Activated naive CD8-positive, alpha-beta T cell treated with anti-CD3 and anti-CD28 coated beads, Interleukin-2, amount 10 ng/mL, durations not matched to agents 7 days and 5 days (primary cell): ENCODE measurements at regions of chr7 and their contacts with region 1.

Region 1: DNA sequence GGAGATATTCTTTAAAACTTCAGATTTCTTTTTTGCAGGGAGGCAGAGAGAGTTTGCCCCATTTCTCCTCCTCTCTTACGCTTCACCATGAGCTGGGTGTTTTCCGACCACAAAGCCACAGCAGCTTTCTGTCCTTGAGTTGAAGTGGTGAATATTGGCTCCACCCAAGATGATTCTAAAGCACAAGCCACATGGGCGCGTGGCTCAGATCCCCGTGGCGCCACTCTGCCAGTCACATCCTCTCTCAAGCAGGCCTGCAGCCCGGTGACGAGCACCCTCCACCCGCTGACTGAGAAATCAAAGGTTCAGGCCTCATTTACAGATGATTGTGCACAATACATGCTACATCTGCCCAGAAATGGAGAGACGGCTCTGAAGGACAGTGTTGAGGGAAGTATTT is 27.6 kb upstream of the RNF32 start:
- DNase-seq: peak; percentile 76
- ATAC-seq: peak; percentile 99
- H3K4me3 Mint-ChIP-seq: peak overlapping the region; percentile 49
- H3K27ac Mint-ChIP-seq: peak overlapping the region; percentile 69
- H3K4me1 Mint-ChIP-seq: peaks cover 33% of the 10 kb centered on the region
- H3K27me3 Mint-ChIP-seq: peaks cover 70% of the 10 kb centered on the region

Region 2: DNA sequence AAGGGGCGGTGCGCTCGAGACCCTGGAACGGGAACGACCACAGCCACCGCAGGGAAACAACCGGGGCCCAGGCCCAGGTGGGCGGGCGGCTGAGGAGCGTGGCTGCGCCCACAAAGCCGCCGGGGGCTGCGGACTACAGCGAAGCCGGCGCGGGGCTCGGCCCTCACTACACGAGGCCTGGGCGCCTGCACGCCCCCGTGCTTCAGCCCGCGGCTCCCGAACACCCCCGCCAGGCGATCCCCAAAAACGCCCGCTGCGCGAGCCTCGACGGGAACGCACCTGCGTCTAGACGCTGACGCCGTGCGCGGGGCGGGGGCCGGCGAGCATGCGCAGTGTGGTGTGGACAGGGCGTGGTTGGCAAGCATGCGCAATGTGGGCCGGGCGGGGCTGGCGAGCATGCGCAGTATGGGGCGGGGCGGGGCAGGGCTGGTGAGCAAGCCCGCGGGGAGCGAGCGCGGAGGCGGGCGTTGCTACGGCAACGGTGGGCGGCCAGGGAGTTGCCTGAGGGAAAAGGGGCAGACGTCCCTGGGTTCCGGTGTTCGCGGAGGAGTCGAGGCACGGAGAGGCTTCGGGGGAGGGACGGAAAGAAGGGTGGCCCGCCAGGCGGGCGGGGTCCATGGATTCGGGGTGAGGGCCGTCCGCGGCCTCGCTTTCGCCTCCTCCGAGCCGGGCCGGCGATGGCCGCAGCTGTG is 27.5 kb after region 1 on chr7 and contains the start of gene RNF32:
- POLR2A ChIA-PET with region 1: interaction called, 12 read pairs
- DNase-seq: peak; percentile 99
- ATAC-seq: peak; percentile 91
- H3K4me3 Mint-ChIP-seq: peak within 1 kb of the TSS; percentile 94
- H3K27ac Mint-ChIP-seq: peak within 1 kb of the TSS; percentile 96
- H3K4me1 Mint-ChIP-seq: peaks cover 14% of the 10 kb centered on the region
- H3K27me3 Mint-ChIP-seq: peaks cover 24% of the 10 kb centered on the region
- total RNA-seq, gene RNF32: 0.97 to 2.2 TPM